ENCODE measurements at regions of chr20 and their contacts with region 1.

Region 1: DNA sequence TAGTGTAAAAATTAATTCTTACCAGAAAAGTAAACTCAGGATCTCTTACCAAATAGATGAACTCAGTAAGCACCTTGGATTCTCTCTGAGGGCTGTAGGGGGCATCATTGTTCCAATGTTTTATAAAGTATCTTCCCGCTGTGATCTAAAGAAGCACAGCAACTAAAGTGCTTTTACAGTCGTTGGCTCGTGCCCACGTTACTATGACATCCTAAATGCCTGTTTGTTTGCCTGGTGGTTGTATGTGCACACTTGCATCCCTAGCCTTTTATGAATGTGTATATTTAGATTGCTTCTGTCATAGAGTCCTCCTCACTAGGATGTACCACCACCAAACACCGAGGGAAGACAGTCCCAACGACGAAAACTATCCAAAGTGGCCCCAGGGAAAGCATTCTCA is 34.5 kb downstream of the SLX4IP start:
- DNase-seq: peak; percentile 77
- ATAC-seq: peak; percentile 80
- H3K4me3 ChIP-seq: no peak overlapping the region
- H3K27ac ChIP-seq: no peak overlapping the region
- H3K4me1 ChIP-seq: peaks cover 27% of the 10 kb centered on the region
- H3K27me3 ChIP-seq: no peaks in the 10 kb centered on the region
- CTCF ChIP-seq: peak; percentile 74
- EP300 ChIP-seq: no peak
- POLR2A ChIP-seq: no peak
- RAD21 ChIP-seq: peak; percentile 65

Region 2: GRCh38 chr20:10536531-10536930 is 66.9 kb after region 1 on chr20:
- CTCF ChIA-PET with region 1: interaction called, 10 read pairs
- POLR2A ChIA-PET with region 1: no interaction called
- in situ Hi-C with region 1: loop called (anchors 5 kb)
- intact Hi-C with region 1: no loop called
- DNase-seq: peak; percentile 61
- ATAC-seq: peak; percentile 12; the same call in 1 of the 3 replicates
- H3K4me3 ChIP-seq: peak overlapping the region in 1 of 3 experiments; percentile 6; a peak in 1 of 6 replicates
- H3K27ac ChIP-seq: peak overlapping the region; percentile 13
- H3K4me1 ChIP-seq: peaks cover 63% of the 10 kb centered on the region
- H3K27me3 ChIP-seq: no peaks in the 10 kb centered on the region
- CTCF ChIP-seq: peak; percentile 77
- EP300 ChIP-seq: no peak
- POLR2A ChIP-seq: no peak
- RAD21 ChIP-seq: peak; percentile 76

Region 3: DNA sequence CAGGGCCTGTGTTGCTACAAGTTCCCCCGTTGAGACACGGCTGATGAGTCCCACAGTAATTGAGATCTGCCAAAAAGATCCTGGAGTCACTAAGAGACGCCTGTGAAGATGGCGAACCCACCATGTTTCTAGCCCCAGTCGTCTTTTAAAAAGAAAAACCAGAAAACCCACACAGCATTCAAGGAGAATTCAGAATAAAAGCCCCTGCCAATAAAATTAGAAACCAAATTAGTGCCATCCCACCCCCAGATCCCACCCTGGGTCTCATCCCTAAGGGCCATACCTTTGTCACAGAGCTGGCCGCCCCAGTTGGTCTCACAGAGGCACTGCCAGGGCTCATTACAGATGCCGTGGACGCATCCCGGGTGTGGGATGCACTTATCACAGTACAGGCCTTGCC is 182.6 kb after region 1 on chr20:
- CTCF ChIA-PET with region 1: no interaction called
- POLR2A ChIA-PET with region 1: no interaction called
- in situ Hi-C with region 1: no loop called
- intact Hi-C with region 1: no loop called
- DNase-seq: no peak
- ATAC-seq: no peak
- H3K4me3 ChIP-seq: no peak overlapping the region
- H3K27ac ChIP-seq: peak overlapping the region; percentile 69
- H3K4me1 ChIP-seq: peaks cover 40% of the 10 kb centered on the region
- H3K27me3 ChIP-seq: no peaks in the 10 kb centered on the region
- CTCF ChIP-seq: no peak
- EP300 ChIP-seq: no peak
- POLR2A ChIP-seq: no peak
- RAD21 ChIP-seq: no peak

Region 4: DNA sequence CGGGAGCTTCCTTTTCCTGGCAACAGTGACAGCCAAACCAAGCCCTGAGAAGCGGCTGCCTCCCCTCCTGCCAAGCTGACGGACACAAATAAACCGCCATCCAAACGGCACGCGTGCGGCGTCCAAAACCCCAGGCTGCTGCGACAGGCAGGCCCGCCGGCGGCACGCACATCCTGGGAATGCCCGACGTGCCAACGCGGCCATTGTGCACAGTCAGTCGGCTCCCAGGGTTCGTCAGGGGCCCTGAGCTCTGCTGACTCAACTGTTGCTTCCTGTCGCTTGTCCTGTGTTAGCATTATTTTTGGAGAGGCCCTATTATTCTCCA is 197.4 kb after region 1 on chr20:
- CTCF ChIA-PET with region 1: no interaction called
- POLR2A ChIA-PET with region 1: no interaction called
- in situ Hi-C with region 1: no loop called
- intact Hi-C with region 1: loop called (anchors 10 kb)
- DNase-seq: no peak
- ATAC-seq: no peak
- H3K4me3 ChIP-seq: peak overlapping the region in 1 of 3 experiments; percentile 6; a peak in 1 of 6 replicates
- H3K27ac ChIP-seq: no peak overlapping the region
- H3K4me1 ChIP-seq: peaks cover 97% of the 10 kb centered on the region
- H3K27me3 ChIP-seq: no peaks in the 10 kb centered on the region
- CTCF ChIP-seq: no peak
- EP300 ChIP-seq: no peak
- POLR2A ChIP-seq: no peak
- RAD21 ChIP-seq: no peak

Region 5: DNA sequence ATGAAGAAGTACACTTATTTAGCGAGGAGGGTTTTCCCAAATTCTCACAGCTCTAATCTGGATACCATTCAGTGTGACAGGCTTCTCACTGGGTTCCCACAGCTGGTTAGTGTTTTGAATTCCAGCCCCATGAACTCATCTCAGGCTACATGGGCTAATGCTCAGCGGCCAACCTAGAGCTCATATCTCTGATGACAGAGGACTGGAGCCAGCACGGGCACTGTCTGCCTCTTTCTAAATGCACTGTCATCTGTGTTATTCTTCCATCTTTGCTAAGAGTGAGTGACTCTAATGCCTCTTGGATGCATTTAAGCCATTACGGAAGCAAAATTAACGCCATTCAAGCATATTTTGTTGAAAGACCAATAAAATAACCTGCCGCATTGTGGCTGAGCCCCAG is 513.1 kb after region 1 on chr20:
- CTCF ChIA-PET with region 1: no interaction called
- POLR2A ChIA-PET with region 1: no interaction called
- in situ Hi-C with region 1: no loop called
- intact Hi-C with region 1: loop called (anchors 10 kb)
- DNase-seq: peak; percentile 10
- ATAC-seq: peak; percentile 54; the same call in 2 of the 3 replicates
- H3K4me3 ChIP-seq: no peak overlapping the region
- H3K27ac ChIP-seq: no peak overlapping the region
- H3K4me1 ChIP-seq: no peaks in the 10 kb centered on the region
- H3K27me3 ChIP-seq: no peaks in the 10 kb centered on the region
- CTCF ChIP-seq: no peak
- EP300 ChIP-seq: no peak
- POLR2A ChIP-seq: no peak
- RAD21 ChIP-seq: no peak